ENCODE measurements at regions of chr12 and their contacts with region 1.

Region 1: DNA sequence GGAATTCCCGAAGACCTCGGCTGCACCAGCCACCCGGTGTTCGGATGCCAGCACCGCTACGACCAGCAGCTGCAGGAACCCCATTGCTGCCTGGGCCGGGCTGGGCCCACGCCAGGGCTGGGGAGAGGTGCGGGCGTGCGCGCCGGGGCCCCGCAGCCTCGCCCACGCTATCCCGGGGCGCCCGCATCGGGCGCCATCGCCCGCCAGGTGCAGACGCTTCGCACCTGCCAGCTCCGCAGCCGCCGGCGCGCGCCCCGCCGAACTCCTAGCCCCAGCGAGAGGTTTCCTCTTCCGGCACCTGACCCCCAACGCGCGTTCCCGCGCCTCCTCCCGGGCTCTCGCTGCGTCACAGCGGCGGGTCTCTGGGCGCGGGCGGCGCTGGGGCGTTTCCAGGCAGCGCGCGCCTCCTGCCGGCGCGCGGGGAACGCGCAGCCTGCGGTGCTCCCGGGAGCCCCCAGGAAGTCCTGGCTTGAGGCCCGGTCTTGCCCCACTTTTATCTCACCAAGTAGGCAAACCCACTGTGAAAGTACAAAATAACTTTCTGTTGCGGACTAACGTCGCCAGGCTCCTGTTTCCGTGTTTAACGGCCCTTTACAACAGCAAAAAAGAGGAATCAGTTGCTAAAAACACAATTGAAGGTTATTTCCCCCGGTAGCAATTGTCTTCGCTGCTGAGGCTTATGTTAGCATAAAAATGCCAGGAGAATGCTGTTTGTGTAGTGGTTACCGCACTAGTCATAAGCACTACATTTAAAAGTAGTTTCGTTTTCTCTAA is at the start of gene TM7SF3:
- DNase-seq: peak; percentile 99
- H3K4me3 Mint-ChIP-seq: peak within 1 kb of the TSS; percentile 94
- H3K27ac Mint-ChIP-seq: peak within 1 kb of the TSS; percentile 95
- H3K4me1 Mint-ChIP-seq: peaks cover 47% of the 10 kb centered on the region
- H3K27me3 Mint-ChIP-seq: no peaks in the 10 kb centered on the region
- total RNA-seq, gene TM7SF3: 44.0 and 51.6 TPM in 2 replicates

Region 2: GRCh38 chr12:26748741-26749431 is 265.4 kb before region 1 on chr12:
- intact Hi-C with region 1: loop called (anchors 5 kb)
- DNase-seq: no peak
- H3K4me3 Mint-ChIP-seq: peak overlapping the region; percentile 51
- H3K27ac Mint-ChIP-seq: peak overlapping the region; percentile 75
- H3K4me1 Mint-ChIP-seq: peaks cover 50% of the 10 kb centered on the region
- H3K27me3 Mint-ChIP-seq: no peaks in the 10 kb centered on the region

Region 3: GRCh38 chr12:26853303-26854030 is 160.8 kb before region 1 on chr12:
- intact Hi-C with region 1: loop called (anchors 2 kb)
- DNase-seq: peak; percentile 90
- H3K4me3 Mint-ChIP-seq: no peak overlapping the region
- H3K27ac Mint-ChIP-seq: no peak overlapping the region
- H3K4me1 Mint-ChIP-seq: no peaks in the 10 kb centered on the region
- H3K27me3 Mint-ChIP-seq: peaks cover 10% of the 10 kb centered on the region

Region 4: DNA sequence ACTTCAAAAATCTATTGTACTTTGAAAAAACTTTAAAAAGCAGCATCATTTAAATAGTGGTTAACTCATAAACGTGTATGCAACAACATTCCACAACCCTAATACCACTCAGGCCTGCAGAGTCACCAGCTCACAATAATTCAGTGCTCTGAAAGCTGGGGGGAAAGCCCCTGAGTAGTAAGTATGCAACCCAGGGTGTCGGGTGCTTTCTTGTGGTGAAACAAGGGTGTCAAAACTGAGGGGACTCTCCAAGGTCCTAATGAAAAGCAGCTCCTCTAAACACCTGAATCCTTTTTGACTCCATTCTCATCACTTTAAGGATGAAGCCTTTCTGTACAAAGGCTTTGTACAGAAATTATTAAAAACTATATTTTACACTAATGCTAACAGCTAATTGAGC is 42.3 kb before region 1 on chr12:
- intact Hi-C with region 1: loop called (anchors 1 kb)
- DNase-seq: peak; percentile 86
- H3K4me3 Mint-ChIP-seq: no peak overlapping the region
- H3K27ac Mint-ChIP-seq: peak overlapping the region; percentile 21
- H3K4me1 Mint-ChIP-seq: peaks cover 16% of the 10 kb centered on the region
- H3K27me3 Mint-ChIP-seq: no peaks in the 10 kb centered on the region

Region 5: DNA sequence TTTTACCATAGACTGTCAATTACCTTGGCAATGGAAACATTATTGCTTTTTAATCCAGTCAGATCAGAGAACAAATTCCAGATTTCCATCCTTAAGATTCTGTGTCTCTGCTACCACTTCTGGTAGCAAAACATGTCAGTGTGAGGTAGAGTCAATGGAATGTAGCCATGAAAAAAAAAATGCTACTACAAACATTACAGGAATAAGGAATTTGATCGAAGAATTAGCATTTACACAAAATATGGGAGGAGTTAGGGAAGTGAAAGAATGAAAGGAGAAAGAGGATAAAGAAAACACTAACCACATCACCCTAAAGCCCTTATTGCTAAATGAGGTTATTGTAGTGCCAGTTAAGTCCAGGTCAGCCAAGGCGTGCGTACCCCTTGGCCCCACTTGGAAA is 17.3 kb after region 1 on chr12:
- intact Hi-C with region 1: no loop called
- DNase-seq: no peak
- H3K4me3 Mint-ChIP-seq: no peak overlapping the region
- H3K27ac Mint-ChIP-seq: no peak overlapping the region
- H3K4me1 Mint-ChIP-seq: no peaks in the 10 kb centered on the region
- H3K27me3 Mint-ChIP-seq: no peaks in the 10 kb centered on the region

Region 6: GRCh38 chr12:27060740-27061139 is 46.5 kb after region 1 on chr12:
- intact Hi-C with region 1: no loop called
- DNase-seq: no peak
- H3K4me3 Mint-ChIP-seq: no peak overlapping the region
- H3K27ac Mint-ChIP-seq: no peak overlapping the region
- H3K4me1 Mint-ChIP-seq: no peaks in the 10 kb centered on the region
- H3K27me3 Mint-ChIP-seq: no peaks in the 10 kb centered on the region

Region 7: GRCh38 chr12:27207615-27208413 is 193.5 kb after region 1 on chr12:
- intact Hi-C with region 1: loop called (anchors 2 kb)
- DNase-seq: peak; percentile 76
- H3K4me3 Mint-ChIP-seq: no peak overlapping the region
- H3K27ac Mint-ChIP-seq: peak overlapping the region; percentile 47
- H3K4me1 Mint-ChIP-seq: peaks cover 21% of the 10 kb centered on the region
- H3K27me3 Mint-ChIP-seq: no peaks in the 10 kb centered on the region

Region 8: DNA sequence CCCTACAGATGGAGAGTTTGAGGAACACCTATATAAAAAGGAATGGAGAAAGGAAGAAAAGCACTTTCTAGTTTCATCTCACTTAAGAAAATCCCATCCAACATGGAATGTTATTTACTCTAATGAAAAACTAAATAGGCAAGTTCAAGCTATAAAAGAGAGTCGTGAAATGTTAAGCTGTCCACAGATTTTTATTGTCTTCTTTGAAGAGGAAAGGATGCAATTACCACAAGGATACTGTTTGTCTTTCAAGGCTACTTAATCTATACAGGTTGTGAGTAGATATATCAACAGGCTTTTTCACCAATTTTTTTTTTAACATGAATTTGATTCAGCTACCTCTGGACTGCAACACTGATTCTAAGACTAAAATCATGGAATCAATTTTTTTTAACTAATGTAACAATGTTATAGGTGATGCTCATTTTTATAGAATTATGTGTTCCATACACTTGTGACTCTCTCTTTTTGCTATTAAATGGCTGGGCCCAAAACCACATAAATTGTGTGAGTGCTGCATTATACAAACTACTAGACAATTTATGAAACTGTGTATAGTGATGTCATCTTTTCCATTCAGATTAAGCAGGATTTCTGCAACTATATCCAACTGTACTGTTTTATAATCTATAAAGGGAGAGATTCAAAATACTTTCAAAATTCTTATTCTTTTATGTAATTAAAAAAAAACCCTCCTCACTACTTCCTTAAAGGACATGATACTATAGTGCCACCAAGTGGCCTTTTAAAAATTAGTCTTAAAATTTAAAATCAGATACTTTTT is 291.6 kb after region 1 on chr12:
- intact Hi-C with region 1: loop called (anchors 2 kb)
- DNase-seq: no peak
- H3K4me3 Mint-ChIP-seq: no peak overlapping the region
- H3K27ac Mint-ChIP-seq: no peak overlapping the region
- H3K4me1 Mint-ChIP-seq: peaks cover 11% of the 10 kb centered on the region
- H3K27me3 Mint-ChIP-seq: no peaks in the 10 kb centered on the region

Region 9: GRCh38 chr12:27710592-27711316 is 696.5 kb after region 1 on chr12 and contains the start of gene MRPS35:
- intact Hi-C with region 1: loop called (anchors 2 kb)
- DNase-seq: peak; percentile 98
- H3K4me3 Mint-ChIP-seq: peak within 1 kb of the TSS; percentile 95
- H3K27ac Mint-ChIP-seq: peak within 1 kb of the TSS; percentile 91
- H3K4me1 Mint-ChIP-seq: peaks cover 31% of the 10 kb centered on the region
- H3K27me3 Mint-ChIP-seq: peaks cover 9% of the 10 kb centered on the region
- total RNA-seq, gene MRPS35: 57.7 and 58.1 TPM in 2 replicates